Endothelial cell of umbilical vein (primary cell): ENCODE measurements at regions of chr6 and their contacts with region 1.

Region 1: GRCh38 chr6:151014404-151015100 is 149.1 kb downstream of the MTHFD1L start:
- DNase-seq: peak; percentile 80
- H3K4me3 ChIP-seq: no peak overlapping the region
- H3K27ac ChIP-seq: peak overlapping the region; percentile 90
- H3K4me1 ChIP-seq: peaks cover 35% of the 10 kb centered on the region
- H3K27me3 ChIP-seq: no peaks in the 10 kb centered on the region
- CTCF ChIP-seq: peak; percentile 91 to 94
- POLR2A ChIP-seq: no peak

Region 2: GRCh38 chr6:150967910-150968309 is 46.6 kb before region 1 on chr6:
- CTCF ChIA-PET with region 1: no interaction called
- POLR2A ChIA-PET with region 1: no interaction called
- dilution Hi-C with region 1: no loop called
- intact Hi-C with region 1: no loop called
- DNase-seq: no peak
- H3K4me3 ChIP-seq: no peak overlapping the region
- H3K27ac ChIP-seq: no peak overlapping the region
- H3K4me1 ChIP-seq: no peaks in the 10 kb centered on the region
- H3K27me3 ChIP-seq: no peaks in the 10 kb centered on the region
- CTCF ChIP-seq: no peak
- POLR2A ChIP-seq: no peak

Region 3: GRCh38 chr6:151029970-151030369 is 15.4 kb after region 1 on chr6:
- CTCF ChIA-PET with region 1: interaction called, 30 read pairs
- POLR2A ChIA-PET with region 1: no interaction called
- dilution Hi-C with region 1: no loop called
- intact Hi-C with region 1: no loop called
- DNase-seq: no peak
- H3K4me3 ChIP-seq: no peak overlapping the region
- H3K27ac ChIP-seq: no peak overlapping the region
- H3K4me1 ChIP-seq: no peaks in the 10 kb centered on the region
- H3K27me3 ChIP-seq: no peaks in the 10 kb centered on the region
- CTCF ChIP-seq: no peak
- POLR2A ChIP-seq: no peak

Region 4: DNA sequence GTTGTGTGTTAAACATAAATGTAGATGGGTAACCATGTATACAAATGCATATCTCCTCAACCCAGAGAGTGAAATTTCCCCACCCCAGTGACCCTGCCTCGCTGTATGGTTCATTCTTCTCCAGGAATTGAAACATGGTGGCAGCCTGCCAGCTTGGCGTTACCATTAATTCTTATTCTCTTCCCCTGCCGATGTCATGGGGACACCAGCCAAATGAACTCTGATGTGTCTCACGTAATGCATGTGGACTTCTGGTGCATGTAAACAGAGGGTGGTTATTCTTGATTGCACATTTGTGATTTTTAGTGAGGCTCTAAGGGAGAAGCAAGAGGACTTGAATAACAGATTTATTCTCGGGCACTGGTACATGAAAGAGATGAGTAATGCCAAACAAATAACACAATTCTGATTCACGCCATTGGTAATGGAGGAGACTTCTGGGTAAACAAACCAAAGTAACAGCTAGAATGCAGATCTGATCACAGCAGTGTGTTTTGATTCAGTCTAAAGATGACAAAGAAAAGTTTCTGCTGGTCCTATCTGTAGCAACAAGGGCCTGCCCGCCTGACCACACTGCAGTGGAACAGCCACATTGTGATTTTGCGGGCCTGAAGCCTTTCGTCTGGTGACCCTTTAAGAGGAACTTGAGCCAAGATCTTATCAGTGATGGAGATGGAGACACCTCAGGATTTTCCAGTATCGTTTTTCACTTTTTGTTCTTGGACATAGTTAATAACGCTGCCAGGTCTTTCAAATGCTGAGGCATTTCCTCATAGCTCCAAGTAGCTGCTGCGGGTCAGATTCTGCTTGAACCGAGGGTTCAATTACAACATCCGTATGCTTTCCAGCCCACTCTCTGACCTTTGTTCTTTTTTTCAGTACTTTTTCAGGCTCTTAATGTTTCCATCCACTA is 53.4 kb after region 1 on chr6:
- CTCF ChIA-PET with region 1: interaction called, 16 read pairs
- POLR2A ChIA-PET with region 1: no interaction called
- dilution Hi-C with region 1: no loop called
- intact Hi-C with region 1: no loop called
- DNase-seq: peak; percentile 99
- H3K4me3 ChIP-seq: no peak overlapping the region
- H3K27ac ChIP-seq: peak overlapping the region; percentile 90
- H3K4me1 ChIP-seq: peaks cover 61% of the 10 kb centered on the region
- H3K27me3 ChIP-seq: no peaks in the 10 kb centered on the region
- CTCF ChIP-seq: no peak
- POLR2A ChIP-seq: peak; percentile 47

Region 5: GRCh38 chr6:151240036-151240685 is 225.6 kb after region 1 on chr6:
- CTCF ChIA-PET with region 1: interaction called, 14 read pairs
- POLR2A ChIA-PET with region 1: no interaction called
- dilution Hi-C with region 1: no loop called
- intact Hi-C with region 1: no loop called
- DNase-seq: peak; percentile 73
- H3K4me3 ChIP-seq: peak overlapping the region; percentile 64 to 96 (median 69)
- H3K27ac ChIP-seq: peak overlapping the region; percentile 59
- H3K4me1 ChIP-seq: peaks cover 30% of the 10 kb centered on the region
- H3K27me3 ChIP-seq: no peaks in the 10 kb centered on the region
- CTCF ChIP-seq: peak in 1 of 2 donors; percentile 17
- POLR2A ChIP-seq: peak; percentile 79

Region 6: GRCh38 chr6:151330134-151330696 is 315.7 kb after region 1 on chr6:
- CTCF ChIA-PET with region 1: interaction called, 284 read pairs
- POLR2A ChIA-PET with region 1: interaction called, 11 read pairs
- dilution Hi-C with region 1: no loop called
- intact Hi-C with region 1: loop called (anchors 1 kb)
- DNase-seq: no peak
- H3K4me3 ChIP-seq: no peak overlapping the region
- H3K27ac ChIP-seq: no peak overlapping the region
- H3K4me1 ChIP-seq: peaks cover 9% of the 10 kb centered on the region
- H3K27me3 ChIP-seq: no peaks in the 10 kb centered on the region
- CTCF ChIP-seq: no peak
- POLR2A ChIP-seq: no peak